ENCODE measurements at regions of chr12 and their contacts with region 1.

Region 1: DNA sequence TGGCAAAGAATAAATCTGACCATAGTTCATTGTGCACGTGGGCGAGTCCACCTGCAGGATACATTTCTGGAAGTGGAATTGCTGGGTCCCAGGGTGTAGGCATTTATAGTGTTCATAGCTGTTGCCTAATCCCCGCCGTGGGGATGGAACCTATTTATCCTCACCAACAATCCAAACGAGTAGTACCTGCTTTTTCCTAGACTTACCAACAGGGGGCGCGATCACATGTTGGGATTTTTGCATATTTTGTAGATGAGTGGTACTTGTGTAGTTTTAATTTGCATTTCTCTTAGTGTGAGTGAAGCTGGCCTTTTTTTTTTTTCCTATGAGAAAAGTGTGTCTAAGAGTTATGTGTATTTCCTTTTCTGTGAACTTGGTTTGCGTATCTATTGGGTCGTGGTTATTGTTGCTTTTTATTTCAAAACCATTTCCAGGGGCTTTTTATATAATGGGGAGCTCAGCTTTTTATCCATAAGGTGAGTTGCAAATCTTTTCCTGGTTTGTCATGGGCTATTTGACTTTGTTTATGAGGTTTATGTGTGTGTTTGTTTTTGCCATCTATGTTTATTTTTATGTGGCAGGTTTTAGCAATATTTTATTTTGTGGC is 67.2 kb downstream of the CCDC92 start:
- DNase-seq: peak; percentile 44 to 88
- ATAC-seq: peak; percentile 63 to 87 (median 77)
- H3K4me3 ChIP-seq: no peak overlapping the region
- H3K4me3 Mint-ChIP-seq: no peak overlapping the region
- H3K27ac ChIP-seq: no peak overlapping the region
- H3K27ac Mint-ChIP-seq: no peak overlapping the region
- H3K4me1 ChIP-seq: no peaks in the 10 kb centered on the region
- H3K4me1 Mint-ChIP-seq: peaks cover 14 to 24% of the 10 kb centered on the region in 2 donors
- H3K27me3 ChIP-seq: no peaks in the 10 kb centered on the region
- H3K27me3 Mint-ChIP-seq: peaks cover 11% of the 10 kb centered on the region in 2 donors
- CTCF ChIP-seq: peak; percentile 83

Region 2: GRCh38 chr12:123801573-123802178 is 103.7 kb before region 1 on chr12:
- intact Hi-C with region 1: no loop called
- DNase-seq: peak in 1 of 2 donors; percentile 14
- ATAC-seq: no peak
- H3K4me3 ChIP-seq: no peak overlapping the region
- H3K4me3 Mint-ChIP-seq: no peak overlapping the region
- H3K27ac ChIP-seq: no peak overlapping the region
- H3K27ac Mint-ChIP-seq: no peak overlapping the region
- H3K4me1 ChIP-seq: no peaks in the 10 kb centered on the region
- H3K4me1 Mint-ChIP-seq: no peaks in the 10 kb centered on the region
- H3K27me3 ChIP-seq: no peaks in the 10 kb centered on the region
- H3K27me3 Mint-ChIP-seq: peaks cover 7% of the 10 kb centered on the region in 2 donors
- CTCF ChIP-seq: no peak

Region 3: DNA sequence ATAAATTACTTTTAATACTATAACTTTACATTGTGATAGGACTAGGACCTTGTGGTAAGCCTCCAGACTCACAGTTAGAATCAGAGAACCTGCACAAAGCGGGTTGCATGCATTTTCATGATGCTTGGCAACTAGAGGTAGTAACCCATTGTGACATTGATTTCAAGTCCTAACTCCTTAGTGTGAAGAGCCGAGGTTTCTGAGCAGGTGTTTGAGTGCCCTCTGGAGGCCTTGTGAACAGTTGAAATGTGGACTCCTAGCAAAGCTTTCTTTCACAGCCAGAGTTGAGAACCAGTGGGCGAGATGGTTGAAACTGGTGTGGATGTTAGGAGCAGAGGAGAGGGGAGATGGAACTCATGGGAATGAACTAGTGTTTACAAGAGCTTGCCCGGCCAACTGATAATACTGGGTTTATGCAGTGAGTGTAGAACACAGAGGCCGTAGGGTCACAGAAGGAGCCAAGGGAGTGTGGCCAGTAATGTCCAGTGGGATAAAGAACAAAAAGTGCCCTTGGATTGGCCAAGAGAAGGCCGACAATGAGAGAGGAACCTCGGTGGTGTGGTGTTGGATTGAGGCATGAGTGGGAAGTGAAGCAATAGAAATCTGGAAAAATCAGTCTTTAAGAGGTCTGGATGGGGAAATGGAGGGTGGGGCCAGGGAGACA is 78.5 kb after region 1 on chr12:
- intact Hi-C with region 1: loop called (anchors 1 kb)
- DNase-seq: peak; percentile 19 to 83
- ATAC-seq: peak; percentile 66 to 86 (median 82)
- H3K4me3 ChIP-seq: no peak overlapping the region
- H3K4me3 Mint-ChIP-seq: no peak overlapping the region
- H3K27ac ChIP-seq: no peak overlapping the region
- H3K27ac Mint-ChIP-seq: peak overlapping the region in 1 of 2 donors; percentile 3
- H3K4me1 ChIP-seq: peaks cover 2% of the 10 kb centered on the region
- H3K4me1 Mint-ChIP-seq: peaks cover 21 to 28% of the 10 kb centered on the region in 2 donors
- H3K27me3 ChIP-seq: no peaks in the 10 kb centered on the region
- H3K27me3 Mint-ChIP-seq: no peaks in the 10 kb centered on the region
- CTCF ChIP-seq: peak; percentile 66

Region 4: GRCh38 chr12:124036674-124037109 is 131.3 kb after region 1 on chr12:
- intact Hi-C with region 1: loop called (anchors 1 kb)
- DNase-seq: peak; percentile 26 to 77
- ATAC-seq: peak; percentile 58 to 70 (median 61)
- H3K4me3 ChIP-seq: no peak overlapping the region
- H3K4me3 Mint-ChIP-seq: no peak overlapping the region
- H3K27ac ChIP-seq: no peak overlapping the region
- H3K27ac Mint-ChIP-seq: no peak overlapping the region
- H3K4me1 ChIP-seq: no peaks in the 10 kb centered on the region
- H3K4me1 Mint-ChIP-seq: peaks cover 5 to 7% of the 10 kb centered on the region in 2 donors
- H3K27me3 ChIP-seq: no peaks in the 10 kb centered on the region
- H3K27me3 Mint-ChIP-seq: peaks cover 14 to 43% of the 10 kb centered on the region in 2 donors
- CTCF ChIP-seq: peak; percentile 93

Measured in natural killer cell (primary cell).